Heart right ventricle (tissue), 16 donors: ENCODE measurements at regions of chr16 and their contacts with region 1.

Region 1: DNA sequence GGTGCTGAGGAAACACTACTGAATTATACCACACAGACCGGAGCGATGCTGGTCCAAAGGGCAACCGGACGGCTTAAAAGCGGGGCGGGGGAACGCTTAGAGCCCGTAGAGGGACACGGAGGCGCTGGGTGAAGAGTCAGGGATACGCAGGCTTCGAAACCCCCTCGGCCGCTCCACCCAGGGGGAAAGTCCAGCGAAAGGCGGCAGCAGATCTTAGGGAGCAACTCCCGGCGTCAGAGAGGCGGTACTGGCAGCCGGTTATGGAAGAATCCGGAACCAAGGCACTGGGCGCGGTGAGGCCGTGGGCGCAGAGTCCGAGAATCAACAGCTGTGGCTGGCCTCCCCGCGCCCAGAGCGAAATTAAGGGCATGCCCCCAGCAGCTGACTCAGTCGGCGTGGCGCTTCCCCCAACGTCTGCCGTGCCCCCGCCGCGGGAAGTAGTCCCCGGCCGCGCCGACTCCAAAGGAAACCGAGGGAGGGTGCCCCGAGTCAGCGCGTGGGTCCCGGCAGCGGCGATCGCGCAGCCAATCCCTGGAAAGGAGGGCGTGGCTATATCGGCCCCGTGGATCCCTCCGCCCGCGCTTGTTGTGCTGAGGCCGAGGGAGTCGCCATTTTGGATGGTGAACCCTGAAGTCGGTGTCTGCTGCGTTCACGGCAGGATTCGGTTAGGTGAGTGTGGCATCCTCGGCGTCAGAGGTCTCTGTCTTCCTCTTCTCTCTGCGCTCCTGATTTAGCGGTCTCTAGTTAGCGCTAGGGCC is at the start of gene IST1:
- DNase-seq: peak; percentile 98 to 99
- ATAC-seq: peak; percentile 96 to 98 (median 98)
- H3K4me3 ChIP-seq: peak within 1 kb of the TSS; percentile 77 to 97 (median 87)
- H3K27ac ChIP-seq: peak within 1 kb of the TSS; percentile 88 to 100 (median 96)
- H3K4me1 ChIP-seq: peaks cover 6 to 49% (median 46%) of the 10 kb centered on the region in 9 donors
- H3K27me3 ChIP-seq: no peaks in the 10 kb centered on the region
- CTCF ChIP-seq: peak in 2 of 9 donors; percentile 15 to 19
- total RNA-seq, gene IST1: 89.1 to 140 (median 108) TPM

Region 2: GRCh38 chr16:71723537-71724319 is 171.4 kb before region 1 on chr16:
- intact Hi-C with region 1: loop called in 1 of 10 experiments (anchors 5 kb)
- DNase-seq: peak; percentile 67 to 85
- ATAC-seq: peak; percentile 80 to 94 (median 88)
- H3K4me3 ChIP-seq: peak overlapping the region; percentile 40 to 87 (median 83)
- H3K27ac ChIP-seq: peak overlapping the region; percentile 50 to 94 (median 86)
- H3K4me1 ChIP-seq: peaks cover 2 to 37% (median 28%) of the 10 kb centered on the region in 9 donors
- H3K27me3 ChIP-seq: peaks cover 0 to 14% (median 0%) of the 10 kb centered on the region in 7 donors
- CTCF ChIP-seq: peak in 1 of 9 donors; percentile 3

Region 3: GRCh38 chr16:71808593-71809459 is 86.3 kb before region 1 on chr16 and contains the start of gene AP1G1:
- intact Hi-C with region 1: loop called in 6 of 10 experiments (anchors 1 to 10 kb)
- DNase-seq: peak; percentile 92 to 96
- ATAC-seq: peak; percentile 98 to 99 (median 99)
- H3K4me3 ChIP-seq: peak within 1 kb of the TSS; percentile 70 to 100 (median 97)
- H3K27ac ChIP-seq: peak within 1 kb of the TSS; percentile 92 to 99 (median 98)
- H3K4me1 ChIP-seq: peaks cover 0 to 41% (median 33%) of the 10 kb centered on the region in 9 donors
- H3K27me3 ChIP-seq: no peaks in the 10 kb centered on the region
- CTCF ChIP-seq: no peak
- total RNA-seq, gene AP1G1: 31.2 to 53.7 (median 36.9) TPM

Region 4: DNA sequence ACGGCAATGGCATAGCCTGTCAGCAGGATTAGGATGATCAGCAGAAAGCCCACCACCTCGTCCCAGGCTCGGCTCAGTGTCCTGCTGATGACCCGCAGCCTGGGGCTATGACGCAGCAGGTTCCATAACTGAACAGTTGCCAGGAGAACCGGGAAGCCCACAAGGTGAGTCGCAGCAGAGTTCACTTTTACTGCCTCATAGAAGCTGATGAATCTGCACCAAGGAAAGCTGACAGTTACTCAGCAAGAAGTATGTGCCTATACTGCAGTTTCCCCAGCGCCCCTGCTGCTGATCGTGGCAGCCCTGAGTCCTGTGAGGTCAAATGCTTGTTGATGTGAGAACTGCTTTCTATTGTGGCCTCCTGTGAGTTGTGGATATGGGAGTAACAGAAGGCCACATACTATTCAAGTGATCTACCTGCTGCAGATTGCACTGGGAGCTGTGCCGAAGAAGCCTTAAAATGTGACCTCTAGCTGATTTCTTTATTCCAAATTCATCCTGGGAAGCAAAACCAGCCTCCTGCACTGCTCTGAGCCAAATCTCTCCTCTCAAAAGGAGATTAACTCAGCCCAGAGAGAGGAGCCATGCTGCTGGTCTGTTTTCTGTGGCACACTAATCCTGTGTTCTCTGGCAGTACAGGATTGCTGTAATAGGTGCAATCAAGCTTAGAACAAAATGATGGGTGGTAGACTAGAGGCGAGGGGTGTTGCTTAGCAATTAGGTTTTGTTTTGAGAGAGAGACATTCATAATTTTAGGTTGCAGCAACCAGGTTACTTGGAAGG is 39.0 kb after region 1 on chr16:
- intact Hi-C with region 1: loop called in 2 of 10 experiments (anchors 5 kb)
- DNase-seq: no peak
- ATAC-seq: peak in 5 of 8 donors; percentile 9 to 36 (median 19)
- H3K4me3 ChIP-seq: no peak overlapping the region
- H3K27ac ChIP-seq: peak overlapping the region in 2 of 10 donors; percentile 23 to 24
- H3K4me1 ChIP-seq: peaks cover 0 to 47% (median 30%) of the 10 kb centered on the region in 9 donors
- H3K27me3 ChIP-seq: no peaks in the 10 kb centered on the region
- CTCF ChIP-seq: no peak

Region 5: GRCh38 chr16:71961066-71962039 is 66.3 kb after region 1 on chr16:
- intact Hi-C with region 1: loop called in 1 of 10 experiments (anchors 5 kb)
- DNase-seq: peak; percentile 81 to 88
- ATAC-seq: peak; percentile 81 to 99 (median 94)
- H3K4me3 ChIP-seq: no peak overlapping the region
- H3K27ac ChIP-seq: no peak overlapping the region
- H3K4me1 ChIP-seq: peaks cover 0 to 14% (median 0%) of the 10 kb centered on the region in 9 donors
- H3K27me3 ChIP-seq: no peaks in the 10 kb centered on the region
- CTCF ChIP-seq: peak; percentile 66 to 90 (median 83)